B cell (primary cell): ENCODE measurements at regions of chr12 and their contacts with region 1.

Region 1: DNA sequence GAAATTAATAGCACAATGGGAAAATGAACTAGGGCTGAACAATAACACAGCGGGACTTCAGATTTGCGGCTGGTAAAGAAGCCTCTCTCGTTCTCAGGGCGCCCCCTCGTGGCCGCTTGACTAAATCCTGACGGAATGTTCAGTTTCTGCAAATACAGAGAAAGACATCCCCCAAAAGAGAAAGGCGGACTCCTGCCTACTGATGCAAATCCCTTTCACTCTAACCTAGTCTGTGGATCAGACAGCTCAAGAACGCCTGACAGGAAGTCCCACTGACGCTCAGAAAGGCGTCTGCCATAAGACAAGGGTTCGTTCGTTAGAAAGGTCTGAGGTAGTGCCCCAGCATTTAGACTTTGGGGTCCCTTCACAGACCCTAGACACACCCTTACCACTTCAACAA is 2.5 kb downstream of the NUAK1 start:
- DNase-seq: peak; percentile 71
- ATAC-seq: no peak
- H3K4me3 ChIP-seq: no peak overlapping the region
- H3K4me3 Mint-ChIP-seq: no peak overlapping the region
- H3K27ac ChIP-seq: no peak overlapping the region
- H3K27ac Mint-ChIP-seq: no peak overlapping the region
- H3K4me1 ChIP-seq: peaks cover 19 to 31% of the 10 kb centered on the region in 2 donors
- H3K4me1 Mint-ChIP-seq: peaks cover 18% of the 10 kb centered on the region
- H3K27me3 ChIP-seq: peaks cover 0 to 67% (median 56%) of the 10 kb centered on the region in 4 experiments
- H3K27me3 Mint-ChIP-seq: peaks cover 73% of the 10 kb centered on the region
- CTCF ChIP-seq: peak; percentile 88

Region 2: GRCh38 chr12:105420659-105421240 is 715.5 kb before region 1 on chr12:
- CTCF ChIA-PET with region 1: interaction called, 88 read pairs
- POLR2A ChIA-PET with region 1: no interaction called
- intact Hi-C with region 1: no loop called
- DNase-seq: peak; percentile 54
- ATAC-seq: peak; percentile 58
- H3K4me3 ChIP-seq: no peak overlapping the region
- H3K4me3 Mint-ChIP-seq: no peak overlapping the region
- H3K27ac ChIP-seq: no peak overlapping the region
- H3K27ac Mint-ChIP-seq: no peak overlapping the region
- H3K4me1 ChIP-seq: no peaks in the 10 kb centered on the region
- H3K4me1 Mint-ChIP-seq: no peaks in the 10 kb centered on the region
- H3K27me3 ChIP-seq: peaks cover 0 to 8% (median 0%) of the 10 kb centered on the region in 4 experiments
- H3K27me3 Mint-ChIP-seq: peaks cover 17% of the 10 kb centered on the region
- CTCF ChIP-seq: peak; percentile 94

Region 3: DNA sequence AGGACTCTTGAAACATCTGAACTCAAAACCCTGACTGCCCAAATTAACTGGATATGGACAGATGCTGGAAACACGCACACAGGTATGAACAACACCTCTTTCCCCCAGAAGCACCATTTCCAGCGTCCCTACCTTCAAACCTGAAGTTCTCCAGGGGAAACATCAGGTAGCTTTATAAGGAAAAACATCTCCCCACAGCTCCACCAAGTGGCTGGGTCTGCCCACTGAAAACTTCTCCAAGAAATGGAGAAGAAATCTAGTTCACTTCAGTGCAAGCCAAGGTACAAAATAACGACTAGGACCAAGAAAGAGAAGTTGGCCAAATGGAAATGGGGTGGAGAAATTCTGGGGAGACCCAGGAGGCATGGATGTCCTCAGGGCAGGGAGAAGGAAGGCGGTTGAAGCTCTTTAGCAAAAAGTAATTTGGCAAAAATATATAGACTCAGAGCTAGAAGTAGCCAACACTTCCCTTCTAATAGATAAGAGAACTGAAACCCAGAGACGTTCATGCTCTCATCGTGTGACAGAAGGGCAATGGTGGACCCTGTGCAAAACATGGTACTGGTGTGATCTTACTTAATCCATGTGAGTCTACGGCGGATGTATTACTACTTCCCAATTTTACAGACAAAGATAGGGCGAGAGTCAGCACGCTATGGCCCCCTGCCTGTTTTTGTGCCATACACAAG is 13.0 kb after region 1 on chr12:
- CTCF ChIA-PET with region 1: interaction called, 35 read pairs
- POLR2A ChIA-PET with region 1: no interaction called
- intact Hi-C with region 1: no loop called
- DNase-seq: no peak
- ATAC-seq: no peak
- H3K4me3 ChIP-seq: no peak overlapping the region
- H3K4me3 Mint-ChIP-seq: no peak overlapping the region
- H3K27ac ChIP-seq: no peak overlapping the region
- H3K27ac Mint-ChIP-seq: no peak overlapping the region
- H3K4me1 ChIP-seq: no peaks in the 10 kb centered on the region
- H3K4me1 Mint-ChIP-seq: peaks cover 2% of the 10 kb centered on the region
- H3K27me3 ChIP-seq: peaks cover 0 to 8% (median 5%) of the 10 kb centered on the region in 4 experiments
- H3K27me3 Mint-ChIP-seq: peaks cover 49% of the 10 kb centered on the region
- CTCF ChIP-seq: no peak

Region 4: GRCh38 chr12:106329231-106329982 is 193.1 kb after region 1 on chr12:
- CTCF ChIA-PET with region 1: no interaction called
- POLR2A ChIA-PET with region 1: no interaction called
- intact Hi-C with region 1: no loop called
- DNase-seq: no peak
- ATAC-seq: no peak
- H3K4me3 ChIP-seq: no peak overlapping the region
- H3K4me3 Mint-ChIP-seq: no peak overlapping the region
- H3K27ac ChIP-seq: no peak overlapping the region
- H3K27ac Mint-ChIP-seq: no peak overlapping the region
- H3K4me1 ChIP-seq: no peaks in the 10 kb centered on the region
- H3K4me1 Mint-ChIP-seq: peaks cover 3% of the 10 kb centered on the region
- H3K27me3 ChIP-seq: no peaks in the 10 kb centered on the region
- H3K27me3 Mint-ChIP-seq: no peaks in the 10 kb centered on the region
- CTCF ChIP-seq: no peak